ENCODE measurements at regions of chr5 and their contacts with region 1.

Region 1: GRCh38 chr5:172777881-172778814 is 7.2 kb upstream of the DUSP1 start:
- DNase-seq: no peak
- ATAC-seq: peak; percentile 31 to 63
- H3K4me3 Mint-ChIP-seq: peak overlapping the region; percentile 20 to 82 (median 68)
- H3K27ac Mint-ChIP-seq: peak overlapping the region; percentile 88 to 99 (median 94)
- H3K4me1 Mint-ChIP-seq: peaks cover 14 to 53% (median 31%) of the 10 kb centered on the region in 4 donors
- H3K27me3 Mint-ChIP-seq: no peaks in the 10 kb centered on the region

Region 2: GRCh38 chr5:172833686-172834414 is 55.7 kb after region 1 on chr5 and contains the start of gene ERGIC1:
- POLR2A ChIA-PET with region 1: interaction called, 110 read pairs
- DNase-seq: peak; percentile 50 to 83 (median 68)
- ATAC-seq: peak; percentile 69 to 84
- H3K4me3 Mint-ChIP-seq: peak within 1 kb of the TSS; percentile 81 to 94 (median 85)
- H3K27ac Mint-ChIP-seq: peak within 1 kb of the TSS; percentile 90 to 98 (median 96)
- H3K4me1 Mint-ChIP-seq: peaks cover 18 to 50% (median 41%) of the 10 kb centered on the region in 4 donors
- H3K27me3 Mint-ChIP-seq: no peaks in the 10 kb centered on the region
- polyA plus RNA-seq, gene ERGIC1: 18.4 to 23.8 (median 21.5) TPM

Region 3: DNA sequence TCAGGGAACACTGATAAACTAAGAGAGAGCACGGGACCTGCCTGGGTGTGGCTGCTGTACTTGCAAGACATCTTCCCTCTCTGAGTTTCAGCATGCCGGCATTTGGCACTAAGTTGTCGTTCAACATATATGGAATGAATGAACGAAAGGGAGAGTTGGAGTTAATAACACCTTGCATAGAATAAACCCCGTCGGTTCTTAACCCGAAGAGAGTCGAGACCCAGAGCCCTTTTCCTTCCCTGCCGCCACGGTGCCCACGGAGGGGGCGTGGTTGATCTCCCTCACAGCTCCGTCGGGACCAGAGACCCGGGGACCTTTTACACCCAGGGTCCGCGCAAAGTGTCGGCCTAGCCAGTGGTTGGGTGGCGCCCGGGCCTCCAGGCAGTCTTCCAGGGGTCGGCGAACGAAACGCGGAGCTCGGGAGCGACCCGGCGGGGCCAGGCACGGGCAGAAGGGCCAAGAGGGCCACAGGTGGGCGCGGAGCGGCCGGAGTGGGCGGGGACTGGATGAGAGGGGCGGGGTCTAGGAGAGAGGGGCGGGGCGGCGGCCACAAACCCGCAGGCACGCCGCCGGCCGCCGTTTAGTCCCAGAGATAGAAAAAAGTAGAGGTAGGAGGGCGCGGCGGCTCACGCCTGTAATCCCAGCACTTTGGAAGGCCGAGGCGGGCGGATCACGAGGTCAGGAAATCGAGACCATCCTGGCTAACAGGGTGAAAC is 180.3 kb after region 1 on chr5:
- POLR2A ChIA-PET with region 1: interaction called, 10 read pairs
- DNase-seq: peak in 9 of 10 donors; percentile 36 to 76 (median 47)
- ATAC-seq: peak; percentile 63 to 64
- H3K4me3 Mint-ChIP-seq: peak overlapping the region; percentile 92 to 98 (median 96)
- H3K27ac Mint-ChIP-seq: peak overlapping the region; percentile 96 to 99 (median 98)
- H3K4me1 Mint-ChIP-seq: peaks cover 29 to 56% (median 37%) of the 10 kb centered on the region in 4 donors
- H3K27me3 Mint-ChIP-seq: no peaks in the 10 kb centered on the region

Measured in naive thymus-derived CD8-positive, alpha-beta T cell (primary cell).